Activated T-helper 2 cell treated with anti-CD3 and anti-CD28 coated beads, Interferon-gamma antibody, Interleukin-2, Interleukin-4, amounts not matched to agents 10 μg/mL and 5 μg/mL and 100 μg/mL, durations not matched to agents 14 hours and 24 hours and 36 hours (primary cell): ENCODE measurements at regions of chr4 and their contacts with region 1.

Region 1: GRCh38 chr4:26992657-26993361 is 132.2 kb downstream of the STIM2 start:
- DNase-seq: no peak
- H3K4me3 Mint-ChIP-seq: no peak overlapping the region
- H3K27ac Mint-ChIP-seq: no peak overlapping the region
- H3K4me1 Mint-ChIP-seq: peaks cover 14% of the 10 kb centered on the region
- H3K27me3 Mint-ChIP-seq: no peaks in the 10 kb centered on the region

Region 2: DNA sequence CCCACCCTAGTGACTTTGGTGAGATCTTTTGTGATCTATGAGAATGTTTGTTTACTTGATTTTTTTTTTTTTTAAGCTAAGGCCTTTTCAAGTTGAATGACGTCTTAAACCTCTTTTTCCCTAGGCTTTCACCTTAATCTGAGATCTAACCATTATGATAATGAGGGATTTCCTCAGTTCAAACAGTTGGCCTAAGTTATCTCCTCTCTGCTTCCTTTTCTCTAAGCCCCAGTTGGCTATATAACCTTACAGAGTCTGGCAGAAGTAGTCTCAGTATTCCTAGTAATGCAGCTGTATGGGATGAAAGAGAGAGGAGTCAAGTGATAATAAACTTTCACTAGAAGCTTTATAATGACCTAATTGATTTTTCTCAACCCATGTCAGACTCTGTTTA is 33.2 kb before region 1 on chr4:
- intact Hi-C with region 1: loop called (anchors 1 kb)
- DNase-seq: no peak
- H3K4me3 Mint-ChIP-seq: no peak overlapping the region
- H3K27ac Mint-ChIP-seq: peak overlapping the region; percentile 50
- H3K4me1 Mint-ChIP-seq: peaks cover 25% of the 10 kb centered on the region
- H3K27me3 Mint-ChIP-seq: no peaks in the 10 kb centered on the region